ENCODE measurements at regions of chr4 and their contacts with region 1.

Region 1: DNA sequence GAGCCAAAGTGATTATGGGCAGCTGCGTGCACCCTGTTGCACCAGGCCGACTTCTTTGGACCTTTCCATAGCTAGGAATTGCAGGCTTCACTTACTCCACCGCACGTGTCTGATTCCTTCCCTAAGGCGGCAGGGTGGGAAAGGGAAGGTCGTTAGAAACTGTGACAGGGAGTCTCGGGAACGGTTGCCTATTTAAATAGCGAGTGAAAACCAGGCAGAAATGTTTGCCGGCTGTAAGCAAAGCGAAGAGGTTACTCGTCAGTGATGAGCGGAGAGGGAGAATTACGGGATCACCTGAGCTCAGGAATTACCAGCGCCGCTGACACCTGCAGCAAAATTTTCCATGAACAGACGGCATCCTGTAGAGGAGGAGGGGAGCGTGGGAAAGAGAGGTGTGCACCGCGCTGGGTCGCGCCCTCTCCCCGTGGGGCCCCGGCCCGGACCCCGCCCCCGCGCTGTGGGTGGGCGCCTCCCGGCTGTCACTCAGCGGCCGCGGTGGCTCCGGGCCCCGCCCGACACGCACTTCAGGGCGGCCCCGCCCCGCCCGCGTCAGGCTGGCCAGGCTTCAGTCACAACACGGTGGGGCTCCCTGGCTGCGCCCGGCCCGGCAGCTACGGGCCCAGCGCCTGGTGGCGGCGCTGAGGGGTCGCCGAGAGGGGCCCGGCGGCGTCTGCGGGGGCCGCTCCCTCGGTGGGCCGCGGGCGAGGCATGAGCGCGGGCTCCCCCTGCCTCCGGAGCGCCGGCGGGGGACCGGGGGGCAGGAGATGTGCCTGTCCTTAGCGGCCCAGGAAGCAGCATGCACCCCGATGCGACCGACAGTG is at the start of gene SNX25:
- DNase-seq: peak; percentile 80
- ATAC-seq: peak; percentile 83
- H3K4me3 ChIP-seq: peak within 1 kb of the TSS; percentile 95
- H3K27ac ChIP-seq: no peak within 1 kb of the TSS
- H3K4me1 ChIP-seq: peaks cover 22% of the 10 kb centered on the region
- H3K27me3 ChIP-seq: no peaks in the 10 kb centered on the region
- CTCF ChIP-seq: no peak
- total RNA-seq, gene SNX25: 8.4 and 9.2 TPM in 2 replicates

Region 2: DNA sequence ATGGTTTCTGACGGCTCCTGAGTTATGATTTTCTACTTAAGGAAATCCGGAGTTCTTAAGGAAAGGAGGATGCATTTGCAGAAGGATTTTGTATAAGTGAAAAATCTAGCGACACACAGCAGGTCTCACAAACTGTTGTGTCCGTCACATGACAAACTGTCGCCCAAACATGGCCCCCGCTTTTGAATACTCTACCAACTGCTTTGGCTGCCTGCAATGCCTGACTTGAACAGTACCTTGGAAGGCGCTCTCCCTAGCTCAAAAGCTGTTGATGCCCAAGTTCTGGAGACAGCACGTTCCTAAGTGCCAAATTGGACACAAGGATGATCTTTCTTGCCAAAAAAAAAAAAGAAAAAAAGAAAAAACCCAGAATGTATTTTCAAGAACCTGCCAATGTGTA is 1094.8 kb before region 1 on chr4:
- CTCF ChIA-PET with region 1: no interaction called
- POLR2A ChIA-PET with region 1: no interaction called
- intact Hi-C with region 1: no loop called
- DNase-seq: peak; percentile 22
- ATAC-seq: no peak
- H3K4me3 ChIP-seq: no peak overlapping the region
- H3K27ac ChIP-seq: no peak overlapping the region
- H3K4me1 ChIP-seq: no peaks in the 10 kb centered on the region
- H3K27me3 ChIP-seq: peaks cover 55% of the 10 kb centered on the region
- CTCF ChIP-seq: 0 out of 2 replicates have a peak, but pooled peaks have one; percentile 20

Region 3: DNA sequence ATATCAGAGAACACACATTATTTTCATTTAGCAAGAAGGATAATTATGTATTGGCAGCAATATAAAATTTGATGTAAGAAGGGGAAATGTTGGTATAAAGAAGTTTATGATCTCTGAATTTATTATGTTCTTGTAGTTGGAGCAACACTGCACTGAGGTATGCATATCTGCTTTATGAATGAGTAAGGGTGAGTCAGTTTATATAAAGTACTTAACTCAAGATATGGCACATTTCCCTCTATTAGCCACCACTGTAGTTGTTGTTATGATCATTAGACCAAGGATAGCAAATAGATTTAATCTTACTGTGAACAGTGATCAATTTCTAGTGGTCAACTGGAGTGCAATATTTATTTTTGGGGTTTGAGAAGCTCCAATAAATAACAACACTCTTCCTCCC is 66.8 kb after region 1 on chr4:
- CTCF ChIA-PET with region 1: no interaction called
- POLR2A ChIA-PET with region 1: no interaction called
- intact Hi-C with region 1: loop called (anchors 5 kb)
- DNase-seq: peak; percentile 58
- ATAC-seq: peak; percentile 93
- H3K4me3 ChIP-seq: no peak overlapping the region
- H3K27ac ChIP-seq: peak overlapping the region; percentile 28; the same call in 1 of the 2 replicates
- H3K4me1 ChIP-seq: peaks cover 30% of the 10 kb centered on the region
- H3K27me3 ChIP-seq: no peaks in the 10 kb centered on the region
- CTCF ChIP-seq: no peak

Measured in PC-3 (cell line).